ENCODE measurements at regions of chr12 and their contacts with region 1.

Region 1: GRCh38 chr12:56645717-56646446 is at the start of gene ATP5F1B:
- DNase-seq: peak; percentile 91
- H3K4me3 Mint-ChIP-seq: peak within 1 kb of the TSS; percentile 96
- H3K27ac Mint-ChIP-seq: peak within 1 kb of the TSS; percentile 95
- H3K4me1 Mint-ChIP-seq: peaks cover 37% of the 10 kb centered on the region
- H3K27me3 Mint-ChIP-seq: no peaks in the 10 kb centered on the region
- total RNA-seq, gene ATP5F1B: 714 and 716 TPM in 2 replicates

Region 2: GRCh38 chr12:56152318-56153033 is 493.4 kb before region 1 on chr12 and contains the start of gene MYL6B:
- intact Hi-C with region 1: loop called (anchors 5 kb)
- DNase-seq: peak; percentile 92
- H3K4me3 Mint-ChIP-seq: peak within 1 kb of the TSS; percentile 88
- H3K27ac Mint-ChIP-seq: peak within 1 kb of the TSS; percentile 99
- H3K4me1 Mint-ChIP-seq: peaks cover 39% of the 10 kb centered on the region
- H3K27me3 Mint-ChIP-seq: no peaks in the 10 kb centered on the region
- total RNA-seq, gene MYL6B: 58.8 and 67.6 TPM in 2 replicates

Region 3: GRCh38 chr12:56616244-56616643 is 29.6 kb before region 1 on chr12:
- intact Hi-C with region 1: no loop called
- DNase-seq: no peak
- H3K4me3 Mint-ChIP-seq: no peak overlapping the region
- H3K27ac Mint-ChIP-seq: no peak overlapping the region
- H3K4me1 Mint-ChIP-seq: peaks cover 19% of the 10 kb centered on the region
- H3K27me3 Mint-ChIP-seq: no peaks in the 10 kb centered on the region

Region 4: DNA sequence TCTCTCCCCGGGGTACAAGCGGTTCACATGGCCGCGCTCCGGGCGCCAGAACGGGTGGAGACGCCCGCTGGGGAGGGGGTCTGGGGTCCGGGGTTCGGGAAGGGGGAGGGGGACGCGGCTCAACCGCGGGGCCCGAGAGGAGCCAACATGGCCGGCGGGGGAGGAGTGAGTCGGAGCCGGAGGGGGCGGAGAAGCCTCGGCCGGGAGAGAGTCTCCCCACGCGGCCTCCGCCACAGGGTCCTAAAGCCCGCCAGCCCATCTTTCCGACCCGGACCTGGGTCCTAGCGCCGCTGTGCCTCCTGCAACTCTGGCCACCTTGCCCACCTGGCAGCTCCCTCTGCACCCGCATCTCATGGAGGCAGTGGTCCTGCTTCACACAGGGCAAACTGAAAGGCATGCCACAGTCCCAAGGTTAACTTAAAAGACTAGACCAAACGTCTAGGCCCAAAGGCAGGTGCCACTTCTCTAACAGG is 15.7 kb before region 1 on chr12 and contains the start of gene BAZ2A:
- intact Hi-C with region 1: loop called (anchors 2 kb)
- DNase-seq: peak; percentile 85
- H3K4me3 Mint-ChIP-seq: peak within 1 kb of the TSS; percentile 97
- H3K27ac Mint-ChIP-seq: peak within 1 kb of the TSS; percentile 89
- H3K4me1 Mint-ChIP-seq: peaks cover 72% of the 10 kb centered on the region
- H3K27me3 Mint-ChIP-seq: no peaks in the 10 kb centered on the region
- total RNA-seq, gene BAZ2A: 119 and 126 TPM in 2 replicates

Region 5: GRCh38 chr12:56657416-56658379 is 11.8 kb after region 1 on chr12:
- intact Hi-C with region 1: loop called (anchors 1 kb)
- DNase-seq: no peak
- H3K4me3 Mint-ChIP-seq: no peak overlapping the region
- H3K27ac Mint-ChIP-seq: peak overlapping the region; percentile 67
- H3K4me1 Mint-ChIP-seq: peaks cover 7% of the 10 kb centered on the region
- H3K27me3 Mint-ChIP-seq: no peaks in the 10 kb centered on the region

Region 6: DNA sequence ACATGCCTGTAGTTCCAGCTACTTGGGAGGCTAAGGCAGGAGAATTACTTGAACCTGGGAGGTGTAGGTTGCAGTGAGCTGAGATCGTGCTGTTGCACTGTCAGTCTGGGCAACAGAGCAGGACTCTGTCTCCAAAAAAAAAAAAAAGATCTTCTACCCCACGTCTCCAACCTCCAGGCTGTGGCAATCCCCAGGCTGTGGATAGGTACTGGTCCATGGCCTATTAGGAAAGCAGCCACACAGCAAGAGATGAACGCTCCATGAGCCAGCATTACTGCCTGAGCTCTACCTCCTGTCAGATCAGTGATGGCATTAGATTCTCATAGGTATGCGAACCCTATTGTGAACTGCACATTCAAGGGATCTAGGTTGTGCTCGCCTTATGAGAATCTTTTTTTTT is 48.3 kb after region 1 on chr12:
- intact Hi-C with region 1: no loop called
- DNase-seq: no peak
- H3K4me3 Mint-ChIP-seq: no peak overlapping the region
- H3K27ac Mint-ChIP-seq: no peak overlapping the region
- H3K4me1 Mint-ChIP-seq: peaks cover 1% of the 10 kb centered on the region
- H3K27me3 Mint-ChIP-seq: no peaks in the 10 kb centered on the region

Region 7: DNA sequence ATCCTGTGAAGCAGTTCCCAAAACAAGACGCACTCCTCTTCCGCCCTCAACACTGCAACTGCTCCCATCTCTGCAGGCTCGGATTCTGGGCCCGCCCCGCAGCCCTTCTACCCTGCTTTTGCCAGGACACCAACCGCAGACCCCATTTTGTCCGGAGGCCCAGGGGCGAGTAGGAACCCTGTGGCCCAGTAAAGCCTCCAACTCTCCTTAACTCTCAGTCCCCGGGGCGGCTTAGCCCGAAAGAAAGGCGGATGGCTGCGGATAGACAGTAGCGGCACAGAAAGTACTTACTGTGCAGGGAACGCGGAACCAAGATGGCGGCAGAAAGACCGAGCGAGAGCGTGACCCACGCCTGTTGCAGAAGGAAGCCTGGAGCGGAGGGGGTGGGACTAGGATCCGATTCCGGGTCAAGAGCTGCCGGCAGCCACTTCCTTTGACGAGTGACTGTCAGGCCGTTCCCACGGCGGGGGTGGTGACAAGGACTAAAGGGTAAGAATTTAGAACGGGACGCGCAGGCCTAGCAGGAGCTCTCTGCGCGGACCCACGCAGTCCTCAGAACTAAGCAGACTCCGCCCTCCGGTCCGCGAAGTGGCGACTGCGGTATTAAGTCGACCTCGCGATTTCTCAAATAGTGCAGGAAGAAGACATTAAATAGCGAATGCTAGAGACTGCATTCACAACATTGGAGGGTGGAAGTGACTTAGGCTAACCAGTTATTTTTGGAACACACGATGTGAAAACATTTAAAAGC is 79.3 kb after region 1 on chr12 and contains the start of gene NACA:
- intact Hi-C with region 1: loop called (anchors 1 kb)
- DNase-seq: peak; percentile 98
- H3K4me3 Mint-ChIP-seq: peak within 1 kb of the TSS; percentile 91
- H3K27ac Mint-ChIP-seq: peak within 1 kb of the TSS; percentile 91
- H3K4me1 Mint-ChIP-seq: peaks cover 48% of the 10 kb centered on the region
- H3K27me3 Mint-ChIP-seq: peaks cover 1% of the 10 kb centered on the region
- total RNA-seq, gene NACA: 942 and 963 TPM in 2 replicates

Measured in activated T-helper 1 cell treated with anti-CD3 and anti-CD28 coated beads, Interleukin-12 subunit alpha, Interleukin-12 subunit beta, Interleukin-2, Interleukin-4 antibody, amounts not matched to agents 30 ng/mL and 10 ng/mL and 1 ng/mL, durations not matched to agents 14 hours and 24 hours and 36 hours (primary cell).